CD8-positive, alpha-beta T cell (primary cell): ENCODE measurements at regions of chr10 and their contacts with region 1.

Region 1: DNA sequence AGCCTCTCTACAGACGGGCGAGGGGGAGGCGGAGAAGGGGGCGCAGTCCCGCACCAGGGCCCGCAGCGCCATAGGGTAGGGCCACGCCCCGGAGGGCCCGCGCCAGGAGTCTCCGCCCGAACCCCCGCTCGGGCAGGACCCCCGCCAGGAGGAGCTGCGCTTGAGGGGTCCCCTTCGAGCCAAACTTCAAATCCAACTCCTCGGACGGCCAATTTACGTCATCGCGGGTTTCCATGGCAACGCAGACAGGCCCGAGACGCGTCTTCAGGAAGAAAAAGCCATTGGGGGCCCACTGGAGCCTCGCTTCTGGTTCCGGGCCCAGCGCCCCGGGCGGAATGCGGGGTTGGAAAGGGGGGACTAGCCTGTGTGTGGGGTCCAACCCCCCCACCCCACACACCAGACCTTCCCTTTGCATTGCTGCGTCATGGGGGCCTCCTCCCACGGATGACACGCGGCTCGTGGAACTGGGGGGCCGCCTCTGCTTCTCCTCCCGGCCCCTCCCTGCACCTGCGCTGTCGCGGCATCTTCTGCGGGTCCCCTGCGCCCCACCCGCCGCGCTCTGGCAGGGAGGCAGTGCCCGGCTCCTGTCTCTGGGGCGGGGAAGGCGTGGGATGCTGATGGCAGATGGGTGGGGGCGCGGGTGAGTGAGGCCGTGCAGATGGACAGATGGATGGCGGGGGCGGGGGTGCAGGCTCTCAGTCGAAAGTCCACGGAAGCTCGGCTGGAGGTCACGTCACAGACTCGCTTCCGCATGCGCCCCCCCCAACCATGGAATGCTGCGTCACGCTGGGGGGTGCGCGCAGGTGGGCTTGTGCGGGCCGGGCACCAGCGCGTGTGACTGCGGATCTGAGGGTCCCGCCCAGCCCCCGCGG is 1.2 kb downstream of the CALY start:
- DNase-seq: peak; percentile 72 to 96 (median 87)
- ATAC-seq: peak; percentile 63
- H3K4me3 ChIP-seq: peak overlapping the region; percentile 62 to 79
- H3K4me3 Mint-ChIP-seq: peak overlapping the region; percentile 81
- H3K27ac ChIP-seq: peak overlapping the region; percentile 64 to 71
- H3K27ac Mint-ChIP-seq: peak overlapping the region; percentile 89
- H3K4me1 ChIP-seq: peaks cover 22% of the 10 kb centered on the region
- H3K4me1 Mint-ChIP-seq: peaks cover 2% of the 10 kb centered on the region
- H3K27me3 ChIP-seq: peaks cover 0 to 30% of the 10 kb centered on the region in 2 experiments
- H3K27me3 Mint-ChIP-seq: no peaks in the 10 kb centered on the region
- CTCF ChIP-seq: no peak

Region 2: GRCh38 chr10:132497023-132497680 is 838.3 kb before region 1 on chr10:
- CTCF ChIA-PET with region 1: no interaction called
- POLR2A ChIA-PET with region 1: no interaction called
- intact Hi-C with region 1: no loop called
- DNase-seq: no peak
- ATAC-seq: no peak
- H3K4me3 ChIP-seq: no peak overlapping the region
- H3K4me3 Mint-ChIP-seq: no peak overlapping the region
- H3K27ac ChIP-seq: no peak overlapping the region
- H3K27ac Mint-ChIP-seq: no peak overlapping the region
- H3K4me1 ChIP-seq: no peaks in the 10 kb centered on the region
- H3K4me1 Mint-ChIP-seq: no peaks in the 10 kb centered on the region
- H3K27me3 ChIP-seq: peaks cover 0 to 2% of the 10 kb centered on the region in 2 experiments
- H3K27me3 Mint-ChIP-seq: peaks cover 11% of the 10 kb centered on the region
- CTCF ChIP-seq: no peak

Region 3: DNA sequence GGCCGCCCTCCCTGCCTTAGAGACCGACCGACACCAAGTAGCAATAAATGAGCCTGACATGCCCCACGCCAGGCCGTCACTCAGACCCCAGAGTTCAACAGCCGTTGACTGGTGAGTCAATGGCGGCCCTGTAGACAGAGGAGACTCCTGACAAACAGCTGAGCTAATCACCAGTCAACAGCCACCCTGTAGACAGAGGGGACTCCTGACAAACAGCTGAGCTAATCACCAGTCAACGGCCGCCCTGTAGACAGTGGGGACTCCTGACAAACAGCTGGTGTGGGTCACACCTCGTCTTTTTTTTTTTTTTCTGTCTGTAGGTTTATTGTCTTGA is 192.3 kb before region 1 on chr10:
- CTCF ChIA-PET with region 1: no interaction called
- POLR2A ChIA-PET with region 1: no interaction called
- intact Hi-C with region 1: no loop called
- DNase-seq: peak in 1 of 9 experiments; percentile 1
- ATAC-seq: no peak
- H3K4me3 ChIP-seq: no peak overlapping the region
- H3K4me3 Mint-ChIP-seq: no peak overlapping the region
- H3K27ac ChIP-seq: no peak overlapping the region
- H3K27ac Mint-ChIP-seq: no peak overlapping the region
- H3K4me1 ChIP-seq: no peaks in the 10 kb centered on the region
- H3K4me1 Mint-ChIP-seq: peaks cover 2% of the 10 kb centered on the region
- H3K27me3 ChIP-seq: peaks cover 0 to 2% of the 10 kb centered on the region in 2 experiments
- H3K27me3 Mint-ChIP-seq: peaks cover 42% of the 10 kb centered on the region
- CTCF ChIP-seq: no peak

Region 4: GRCh38 chr10:133289761-133290160 is 45.7 kb before region 1 on chr10:
- CTCF ChIA-PET with region 1: no interaction called
- POLR2A ChIA-PET with region 1: no interaction called
- intact Hi-C with region 1: no loop called
- DNase-seq: no peak
- ATAC-seq: no peak
- H3K4me3 ChIP-seq: no peak overlapping the region
- H3K4me3 Mint-ChIP-seq: no peak overlapping the region
- H3K27ac ChIP-seq: no peak overlapping the region
- H3K27ac Mint-ChIP-seq: no peak overlapping the region
- H3K4me1 ChIP-seq: no peaks in the 10 kb centered on the region
- H3K4me1 Mint-ChIP-seq: no peaks in the 10 kb centered on the region
- H3K27me3 ChIP-seq: no peaks in the 10 kb centered on the region
- H3K27me3 Mint-ChIP-seq: no peaks in the 10 kb centered on the region
- CTCF ChIP-seq: no peak

Region 5: DNA sequence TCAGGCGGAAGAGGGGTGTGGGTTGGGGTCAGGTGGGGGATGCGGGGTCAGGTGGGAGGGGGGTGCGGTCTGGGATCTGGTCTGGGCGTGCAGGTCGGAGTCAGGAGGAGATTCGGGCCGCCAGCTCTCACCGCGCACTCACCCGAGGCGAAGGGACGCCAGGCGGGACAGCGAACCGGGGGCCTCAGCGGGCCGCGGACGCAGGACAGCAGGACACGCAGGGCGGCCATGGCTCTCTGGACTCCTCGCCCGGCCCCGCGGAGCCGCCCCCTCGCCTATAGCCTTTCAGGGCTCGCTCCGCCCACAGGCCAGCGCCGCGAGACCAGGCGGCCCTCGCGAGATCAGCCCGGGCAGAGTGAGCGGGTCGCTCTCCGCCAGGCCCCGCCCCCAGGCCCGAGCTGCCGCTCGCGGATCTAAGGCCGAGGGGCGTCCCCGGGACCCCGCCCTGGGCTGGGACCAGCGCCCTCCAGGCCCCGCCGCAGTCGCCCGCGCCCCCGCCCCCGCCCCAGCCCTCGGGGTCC is 37.7 kb after region 1 on chr10 and contains the start of gene ECHS1:
- CTCF ChIA-PET with region 1: no interaction called
- POLR2A ChIA-PET with region 1: interaction called, 6 read pairs
- intact Hi-C with region 1: loop called (anchors 2 to 5 kb)
- DNase-seq: peak; percentile 81 to 95 (median 92)
- ATAC-seq: peak; percentile 99
- H3K4me3 ChIP-seq: peak within 1 kb of the TSS; percentile 56 to 73
- H3K4me3 Mint-ChIP-seq: peak within 1 kb of the TSS; percentile 78
- H3K27ac ChIP-seq: peak within 1 kb of the TSS in 1 of 2 experiments; percentile 48
- H3K27ac Mint-ChIP-seq: peak within 1 kb of the TSS; percentile 32
- H3K4me1 ChIP-seq: peaks cover 10% of the 10 kb centered on the region
- H3K4me1 Mint-ChIP-seq: peaks cover 6% of the 10 kb centered on the region
- H3K27me3 ChIP-seq: no peaks in the 10 kb centered on the region
- H3K27me3 Mint-ChIP-seq: no peaks in the 10 kb centered on the region
- CTCF ChIP-seq: no peak
- total RNA-seq, gene ECHS1: 7.9 to 8.5 TPM

Region 6: DNA sequence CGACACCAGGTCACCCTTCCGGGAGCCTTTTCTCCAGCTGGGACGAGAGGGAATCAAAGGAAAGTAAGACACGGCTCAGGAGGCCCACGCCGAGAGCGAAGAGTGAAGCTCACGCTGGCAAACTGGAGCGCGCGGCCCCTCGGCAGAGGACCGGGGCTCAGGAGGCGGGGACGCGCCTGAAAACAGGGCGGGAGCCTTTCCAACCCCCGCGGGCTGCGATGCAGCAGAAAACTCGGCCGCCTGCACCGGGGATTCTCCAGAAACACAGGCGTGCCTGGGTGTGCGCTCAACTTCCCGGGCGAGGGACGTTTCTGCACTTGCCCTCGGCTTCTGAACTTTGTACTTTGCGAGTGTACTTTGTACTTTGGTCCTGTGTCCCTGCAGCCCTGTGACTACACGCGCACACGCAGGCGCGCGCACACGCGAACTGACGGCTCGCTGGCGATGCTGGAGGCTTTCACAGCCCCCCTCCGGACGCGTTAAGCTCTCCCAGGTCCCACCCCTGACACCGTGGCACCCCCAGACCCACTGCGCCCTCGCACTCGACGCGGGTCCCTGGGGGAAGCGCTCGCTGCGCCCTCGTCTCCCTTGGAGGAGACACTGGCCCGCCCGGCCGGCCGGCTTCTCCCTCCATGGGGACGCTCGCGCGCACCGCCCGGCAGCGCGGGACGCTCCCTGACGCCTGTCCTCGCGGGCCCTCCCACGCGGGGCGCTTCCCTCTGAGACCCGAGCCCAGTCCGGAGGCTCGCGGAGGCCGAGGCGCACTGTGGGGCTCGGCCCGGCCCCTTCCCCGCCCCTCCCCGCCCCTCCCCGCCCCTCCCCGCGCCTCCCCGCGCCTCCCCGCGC is 43.0 kb after region 1 on chr10:
- CTCF ChIA-PET with region 1: no interaction called
- POLR2A ChIA-PET with region 1: interaction called, 6 read pairs
- intact Hi-C with region 1: loop called (anchors 2 to 5 kb)
- DNase-seq: peak in 8 of 9 experiments; percentile 36 to 78 (median 60)
- ATAC-seq: peak; percentile 61
- H3K4me3 ChIP-seq: peak overlapping the region; percentile 85 to 95
- H3K4me3 Mint-ChIP-seq: peak overlapping the region; percentile 87
- H3K27ac ChIP-seq: peak overlapping the region; percentile 40 to 43
- H3K27ac Mint-ChIP-seq: peak overlapping the region; percentile 66
- H3K4me1 ChIP-seq: peaks cover 17% of the 10 kb centered on the region
- H3K4me1 Mint-ChIP-seq: peaks cover 10% of the 10 kb centered on the region
- H3K27me3 ChIP-seq: no peaks in the 10 kb centered on the region
- H3K27me3 Mint-ChIP-seq: no peaks in the 10 kb centered on the region
- CTCF ChIP-seq: no peak